ENCODE measurements at regions of chr17 and their contacts with region 1.

Region 1: GRCh38 chr17:58006924-58007780 is at the start of gene SRSF1:
- DNase-seq: peak; percentile 99
- ATAC-seq: peak; percentile 87
- H3K4me3 ChIP-seq: peak within 1 kb of the TSS; percentile 83 to 100 (median 96)
- H3K4me3 Mint-ChIP-seq: peak within 1 kb of the TSS; percentile 100
- H3K27ac ChIP-seq: peak within 1 kb of the TSS; percentile 93 to 95
- H3K27ac Mint-ChIP-seq: peak within 1 kb of the TSS; percentile 100
- H3K4me1 ChIP-seq: peaks cover 25 to 38% of the 10 kb centered on the region in 2 donors
- H3K4me1 Mint-ChIP-seq: peaks cover 46% of the 10 kb centered on the region
- H3K27me3 ChIP-seq: no peaks in the 10 kb centered on the region
- H3K27me3 Mint-ChIP-seq: no peaks in the 10 kb centered on the region
- CTCF ChIP-seq: no peak
- total RNA-seq, gene SRSF1: 221 and 250 TPM in 2 replicates

Region 2: GRCh38 chr17:57084802-57085447 is 922.2 kb before region 1 on chr17 and contains the start of gene AKAP1:
- CTCF ChIA-PET with region 1: no interaction called
- POLR2A ChIA-PET with region 1: interaction called, 4 read pairs
- intact Hi-C with region 1: loop called (anchors 2 kb)
- DNase-seq: peak; percentile 97
- ATAC-seq: peak; percentile 85
- H3K4me3 ChIP-seq: peak within 1 kb of the TSS; percentile 71 to 95 (median 85)
- H3K4me3 Mint-ChIP-seq: peak within 1 kb of the TSS; percentile 95
- H3K27ac ChIP-seq: peak within 1 kb of the TSS; percentile 77 to 86
- H3K27ac Mint-ChIP-seq: peak within 1 kb of the TSS; percentile 91
- H3K4me1 ChIP-seq: peaks cover 14 to 16% of the 10 kb centered on the region in 2 donors
- H3K4me1 Mint-ChIP-seq: peaks cover 20% of the 10 kb centered on the region
- H3K27me3 ChIP-seq: peaks cover 0 to 3% (median 0%) of the 10 kb centered on the region in 4 experiments
- H3K27me3 Mint-ChIP-seq: no peaks in the 10 kb centered on the region
- CTCF ChIP-seq: no peak
- total RNA-seq, gene AKAP1: 20.1 and 27.1 TPM in 2 replicates

Region 3: GRCh38 chr17:57927048-57927723 is 80.0 kb before region 1 on chr17:
- CTCF ChIA-PET with region 1: no interaction called
- POLR2A ChIA-PET with region 1: no interaction called
- intact Hi-C with region 1: no loop called
- DNase-seq: no peak
- ATAC-seq: no peak
- H3K4me3 ChIP-seq: no peak overlapping the region
- H3K4me3 Mint-ChIP-seq: no peak overlapping the region
- H3K27ac ChIP-seq: no peak overlapping the region
- H3K27ac Mint-ChIP-seq: no peak overlapping the region
- H3K4me1 ChIP-seq: peaks cover 0 to 5% of the 10 kb centered on the region in 2 donors
- H3K4me1 Mint-ChIP-seq: peaks cover 2% of the 10 kb centered on the region
- H3K27me3 ChIP-seq: peaks cover 0 to 76% (median 32%) of the 10 kb centered on the region in 4 experiments
- H3K27me3 Mint-ChIP-seq: peaks cover 65% of the 10 kb centered on the region
- CTCF ChIP-seq: no peak

Region 4: GRCh38 chr17:57987580-57988421 is 19.4 kb before region 1 on chr17 and contains the start of gene VEZF1:
- CTCF ChIA-PET with region 1: interaction called, 32 read pairs
- POLR2A ChIA-PET with region 1: interaction called, 16 read pairs
- intact Hi-C with region 1: loop called (anchors 1 kb)
- DNase-seq: peak; percentile 89
- ATAC-seq: peak; percentile 70
- H3K4me3 ChIP-seq: peak within 1 kb of the TSS; percentile 50 to 89 (median 82)
- H3K4me3 Mint-ChIP-seq: peak within 1 kb of the TSS; percentile 95
- H3K27ac ChIP-seq: peak within 1 kb of the TSS; percentile 66 to 82
- H3K27ac Mint-ChIP-seq: peak within 1 kb of the TSS; percentile 97
- H3K4me1 ChIP-seq: peaks cover 36 to 41% of the 10 kb centered on the region in 2 donors
- H3K4me1 Mint-ChIP-seq: peaks cover 58% of the 10 kb centered on the region
- H3K27me3 ChIP-seq: no peaks in the 10 kb centered on the region
- H3K27me3 Mint-ChIP-seq: no peaks in the 10 kb centered on the region
- CTCF ChIP-seq: no peak
- total RNA-seq, gene VEZF1: 63.9 and 75.9 TPM in 2 replicates

Region 5: DNA sequence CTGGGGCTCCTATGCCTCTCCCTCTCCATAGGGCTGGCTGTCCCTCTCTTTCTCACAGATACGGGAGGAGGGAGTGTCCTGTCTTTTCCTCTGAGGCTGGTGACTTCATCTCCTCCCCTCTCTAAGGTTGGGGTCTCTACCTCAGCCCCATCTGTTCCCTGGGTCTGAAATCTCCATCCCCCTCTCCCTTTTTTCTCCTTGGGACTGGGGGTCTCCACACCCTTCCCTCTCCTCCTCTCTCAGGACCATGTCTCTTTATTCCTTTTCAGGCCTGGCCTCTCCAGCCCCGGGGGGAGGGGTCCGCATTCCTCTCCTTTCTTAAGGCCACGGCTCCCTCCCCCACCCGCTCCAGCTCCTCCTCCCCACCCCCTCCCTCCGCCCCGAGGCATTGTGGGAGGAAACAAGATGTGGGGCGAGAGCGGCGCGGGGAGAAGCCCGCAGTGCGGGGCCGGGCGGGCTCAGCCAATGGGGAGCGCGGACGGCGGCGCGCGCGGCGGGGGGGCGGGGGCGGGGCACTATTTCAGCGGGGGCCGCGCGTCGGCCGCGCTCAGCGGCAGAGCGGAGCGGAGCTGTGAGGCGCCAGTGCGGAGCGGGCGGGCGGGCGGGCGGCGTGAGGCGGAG is 75.8 kb after region 1 on chr17 and contains the start of gene DYNLL2:
- CTCF ChIA-PET with region 1: interaction called, 3 read pairs
- POLR2A ChIA-PET with region 1: interaction called, 16 read pairs
- intact Hi-C with region 1: loop called (anchors 1 kb)
- DNase-seq: peak; percentile 90
- ATAC-seq: peak; percentile 80
- H3K4me3 ChIP-seq: peak within 1 kb of the TSS; percentile 70 to 89 (median 79)
- H3K4me3 Mint-ChIP-seq: peak within 1 kb of the TSS; percentile 87
- H3K27ac ChIP-seq: peak within 1 kb of the TSS; percentile 66 to 86
- H3K27ac Mint-ChIP-seq: peak within 1 kb of the TSS; percentile 81
- H3K4me1 ChIP-seq: peaks cover 16 to 19% of the 10 kb centered on the region in 2 donors
- H3K4me1 Mint-ChIP-seq: peaks cover 31% of the 10 kb centered on the region
- H3K27me3 ChIP-seq: peaks cover 0 to 5% (median 0%) of the 10 kb centered on the region in 4 experiments
- H3K27me3 Mint-ChIP-seq: no peaks in the 10 kb centered on the region
- CTCF ChIP-seq: no peak
- total RNA-seq, gene DYNLL2: 24.4 and 25.2 TPM in 2 replicates

Region 6: GRCh38 chr17:58210922-58211321 is 203.8 kb after region 1 on chr17:
- CTCF ChIA-PET with region 1: no interaction called
- POLR2A ChIA-PET with region 1: no interaction called
- intact Hi-C with region 1: no loop called
- DNase-seq: no peak
- ATAC-seq: no peak
- H3K4me3 ChIP-seq: no peak overlapping the region
- H3K4me3 Mint-ChIP-seq: no peak overlapping the region
- H3K27ac ChIP-seq: no peak overlapping the region
- H3K27ac Mint-ChIP-seq: no peak overlapping the region
- H3K4me1 ChIP-seq: no peaks in the 10 kb centered on the region
- H3K4me1 Mint-ChIP-seq: peaks cover 1% of the 10 kb centered on the region
- H3K27me3 ChIP-seq: no peaks in the 10 kb centered on the region
- H3K27me3 Mint-ChIP-seq: no peaks in the 10 kb centered on the region
- CTCF ChIP-seq: no peak

Region 7: GRCh38 chr17:58631523-58632323 is 624.6 kb after region 1 on chr17:
- CTCF ChIA-PET with region 1: no interaction called
- POLR2A ChIA-PET with region 1: no interaction called
- intact Hi-C with region 1: loop called (anchors 5 kb)
- DNase-seq: peak; percentile 97
- ATAC-seq: peak; percentile 82
- H3K4me3 ChIP-seq: peak overlapping the region; percentile 28 to 84 (median 57)
- H3K4me3 Mint-ChIP-seq: no peak overlapping the region
- H3K27ac ChIP-seq: peak overlapping the region; percentile 81 to 99
- H3K27ac Mint-ChIP-seq: no peak overlapping the region
- H3K4me1 ChIP-seq: peaks cover 9% of the 10 kb centered on the region in 2 donors
- H3K4me1 Mint-ChIP-seq: peaks cover 12% of the 10 kb centered on the region
- H3K27me3 ChIP-seq: no peaks in the 10 kb centered on the region
- H3K27me3 Mint-ChIP-seq: no peaks in the 10 kb centered on the region
- CTCF ChIP-seq: peak; percentile 43

Region 8: DNA sequence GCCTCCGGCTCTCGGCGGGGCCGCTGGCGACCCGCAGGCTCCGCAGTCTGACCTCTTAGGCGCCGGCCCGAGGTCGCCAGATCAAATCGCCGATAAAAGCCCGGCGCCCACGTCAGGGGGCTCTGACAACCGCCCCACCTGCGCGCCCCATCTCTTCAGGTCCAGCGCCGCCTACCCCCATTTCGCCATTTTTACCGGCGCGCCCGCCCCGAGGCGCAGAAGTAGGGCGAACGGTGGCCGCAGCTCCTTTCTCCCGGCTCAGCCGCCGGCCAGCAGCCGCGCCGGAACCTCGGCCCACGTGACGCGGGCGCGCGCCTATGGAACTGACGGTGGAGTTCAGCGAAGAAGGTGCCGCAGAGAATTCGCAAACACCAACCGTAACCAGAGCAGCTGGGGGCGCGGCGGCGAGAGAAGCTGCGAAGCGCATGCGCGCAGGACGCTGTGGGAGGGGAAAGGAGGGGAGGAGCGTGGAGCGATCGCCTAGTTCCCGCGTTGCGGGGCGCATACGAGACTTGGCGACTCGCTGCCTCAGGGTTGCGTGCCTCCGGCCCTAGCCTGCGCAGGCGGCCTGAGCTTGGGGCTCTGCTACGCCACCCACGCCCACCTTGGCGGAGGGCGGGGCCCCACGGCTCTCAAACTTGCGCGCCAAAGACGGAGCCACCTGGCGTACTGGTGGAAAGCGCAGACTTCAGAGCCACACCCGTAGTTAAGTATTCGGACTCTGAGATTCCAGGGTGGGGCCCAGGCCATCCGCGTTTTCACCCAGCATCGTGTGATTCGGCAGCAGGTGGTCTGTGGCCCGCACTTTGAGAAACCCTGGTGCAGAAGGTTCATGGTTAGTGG is 1099.5 kb after region 1 on chr17 and contains the start of gene TRIM37:
- CTCF ChIA-PET with region 1: no interaction called
- POLR2A ChIA-PET with region 1: no interaction called
- intact Hi-C with region 1: loop called (anchors 10 kb)
- DNase-seq: peak; percentile 100
- ATAC-seq: peak; percentile 96
- H3K4me3 ChIP-seq: peak within 1 kb of the TSS; percentile 56 to 92 (median 83)
- H3K4me3 Mint-ChIP-seq: peak within 1 kb of the TSS; percentile 94
- H3K27ac ChIP-seq: peak within 1 kb of the TSS; percentile 86 to 88
- H3K27ac Mint-ChIP-seq: peak within 1 kb of the TSS; percentile 93
- H3K4me1 ChIP-seq: peaks cover 11 to 12% of the 10 kb centered on the region in 2 donors
- H3K4me1 Mint-ChIP-seq: peaks cover 27% of the 10 kb centered on the region
- H3K27me3 ChIP-seq: no peaks in the 10 kb centered on the region
- H3K27me3 Mint-ChIP-seq: no peaks in the 10 kb centered on the region
- CTCF ChIP-seq: no peak
- total RNA-seq, gene TRIM37: 28.3 and 33.8 TPM in 2 replicates

Measured in B cell (primary cell).